ENCODE measurements at regions of chr17 and their contacts with region 1.

Region 1: DNA sequence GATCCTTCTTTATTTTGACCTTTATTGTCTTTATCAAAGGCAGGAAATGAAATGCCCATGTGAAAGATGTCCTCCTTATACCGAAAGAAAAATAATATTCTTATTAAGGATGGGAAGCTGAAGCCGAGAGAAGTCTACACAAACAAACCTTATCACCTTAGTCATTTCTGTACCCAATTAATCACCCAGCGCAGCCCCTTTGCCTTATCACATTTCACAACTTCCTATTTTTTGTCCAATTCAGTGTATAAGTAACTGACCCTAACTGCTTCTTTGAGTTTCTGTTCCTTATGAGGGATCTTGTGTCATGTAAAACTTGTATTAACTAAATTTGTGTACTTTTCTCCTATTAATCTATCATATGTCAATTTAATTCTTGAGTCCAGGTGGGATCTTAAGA is 16.4 kb upstream of the CCL23 start:
- DNase-seq: no peak
- ATAC-seq: peak; percentile 96
- H3K4me3 Mint-ChIP-seq: no peak overlapping the region
- H3K27ac Mint-ChIP-seq: peak overlapping the region; percentile 6
- H3K4me1 Mint-ChIP-seq: peaks cover 23% of the 10 kb centered on the region
- H3K27me3 Mint-ChIP-seq: peaks cover 12% of the 10 kb centered on the region
- CTCF ChIP-seq: no peak

Region 2: DNA sequence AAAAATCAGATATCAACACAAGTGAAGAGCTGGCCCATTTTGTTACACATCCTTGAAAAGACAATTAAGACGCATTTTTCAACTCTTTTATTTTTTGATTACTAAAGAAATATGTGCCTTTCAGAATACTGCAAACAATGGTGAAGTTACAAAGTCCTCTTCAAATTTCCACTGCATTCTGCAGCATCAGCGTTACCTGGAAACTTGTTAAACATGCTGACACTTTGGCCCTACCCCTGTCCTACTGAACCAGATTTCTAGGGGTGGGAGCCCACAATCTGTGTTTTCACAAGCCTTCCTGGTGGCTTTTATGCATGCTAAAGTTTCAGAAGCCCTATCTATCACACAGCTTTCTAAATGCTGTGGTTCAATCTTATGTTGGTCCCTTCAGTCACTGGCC is 43.1 kb before region 1 on chr17:
- CTCF ChIA-PET with region 1: no interaction called
- POLR2A ChIA-PET with region 1: no interaction called
- intact Hi-C with region 1: loop called (anchors 5 kb)
- DNase-seq: no peak
- ATAC-seq: no peak
- H3K4me3 Mint-ChIP-seq: no peak overlapping the region
- H3K27ac Mint-ChIP-seq: no peak overlapping the region
- H3K4me1 Mint-ChIP-seq: peaks cover 19% of the 10 kb centered on the region
- H3K27me3 Mint-ChIP-seq: peaks cover 7% of the 10 kb centered on the region
- CTCF ChIP-seq: no peak

Region 3: DNA sequence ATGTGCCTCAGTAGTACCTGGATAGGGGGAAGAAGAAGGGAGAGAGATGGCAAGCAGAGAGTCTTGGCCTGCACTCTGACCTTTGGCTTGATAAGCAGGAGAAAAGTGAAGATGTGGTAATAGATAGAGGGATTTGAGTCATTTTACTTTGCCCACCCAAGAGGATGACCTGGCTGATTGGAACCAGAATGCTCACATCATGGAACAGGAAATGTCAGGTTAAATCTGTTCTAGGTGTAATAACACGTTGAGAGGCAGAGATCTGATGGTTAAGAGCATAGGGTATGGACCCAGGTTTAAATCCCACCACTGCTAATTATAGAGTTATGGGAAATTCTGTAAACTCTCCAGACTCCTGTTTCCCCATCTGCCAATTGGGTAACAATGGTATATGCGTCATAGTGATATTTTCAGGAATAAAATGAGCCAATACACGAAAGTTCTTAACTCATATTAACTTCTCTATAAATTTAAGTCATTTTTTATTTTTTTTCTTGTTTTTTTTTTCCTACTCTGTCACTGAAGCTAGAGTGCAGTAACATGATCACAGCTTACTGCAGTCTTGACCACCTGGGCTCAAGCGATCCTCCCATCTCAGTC is 21.9 kb after region 1 on chr17:
- CTCF ChIA-PET with region 1: no interaction called
- POLR2A ChIA-PET with region 1: no interaction called
- intact Hi-C with region 1: no loop called
- DNase-seq: no peak
- ATAC-seq: no peak
- H3K4me3 Mint-ChIP-seq: no peak overlapping the region
- H3K27ac Mint-ChIP-seq: no peak overlapping the region
- H3K4me1 Mint-ChIP-seq: peaks cover 3% of the 10 kb centered on the region
- H3K27me3 Mint-ChIP-seq: peaks cover 3% of the 10 kb centered on the region
- CTCF ChIP-seq: no peak

Region 4: GRCh38 chr17:36066365-36066985 is 32.3 kb after region 1 on chr17:
- CTCF ChIA-PET with region 1: no interaction called
- POLR2A ChIA-PET with region 1: no interaction called
- intact Hi-C with region 1: no loop called
- DNase-seq: no peak
- ATAC-seq: no peak
- H3K4me3 Mint-ChIP-seq: no peak overlapping the region
- H3K27ac Mint-ChIP-seq: no peak overlapping the region
- H3K4me1 Mint-ChIP-seq: peaks cover 5% of the 10 kb centered on the region
- H3K27me3 Mint-ChIP-seq: peaks cover 3% of the 10 kb centered on the region
- CTCF ChIP-seq: no peak

Region 5: DNA sequence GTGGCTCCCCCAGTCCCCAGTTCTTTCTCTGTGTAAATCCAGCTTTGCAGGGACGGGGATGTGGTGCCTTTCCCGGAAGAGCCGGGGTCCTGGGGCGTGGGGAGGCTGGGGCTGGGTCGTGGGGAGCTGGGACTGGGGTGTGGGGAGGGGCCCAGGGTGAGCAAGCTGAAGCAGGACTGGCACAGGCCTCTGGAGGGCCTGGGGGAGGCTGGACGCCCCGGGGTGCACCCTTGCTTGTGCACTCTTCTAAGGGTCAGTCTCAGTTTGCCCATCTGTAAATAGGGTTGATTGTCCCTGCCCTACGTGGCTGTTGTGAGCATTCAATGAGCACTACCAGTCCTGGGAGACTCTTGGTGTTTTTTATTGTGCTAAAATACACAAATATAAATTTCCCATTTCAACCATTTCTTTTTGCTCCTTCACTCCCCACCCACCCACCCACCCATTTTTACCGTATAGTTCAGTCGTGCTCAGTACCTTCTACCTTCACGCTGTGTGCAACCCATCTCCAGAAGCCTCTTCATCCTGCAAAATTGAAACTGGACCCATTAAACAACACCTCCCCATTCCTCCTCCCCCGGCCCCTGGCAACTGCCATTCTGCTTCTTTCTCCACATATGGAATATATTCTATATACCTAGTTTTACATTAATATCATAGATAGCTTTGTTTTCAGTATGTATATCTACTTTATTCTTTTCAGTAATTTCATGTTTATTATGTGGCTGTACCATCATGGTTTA is 150.1 kb after region 1 on chr17:
- CTCF ChIA-PET with region 1: no interaction called
- POLR2A ChIA-PET with region 1: interaction called, 13 read pairs
- intact Hi-C with region 1: no loop called
- DNase-seq: no peak
- ATAC-seq: no peak
- H3K4me3 Mint-ChIP-seq: no peak overlapping the region
- H3K27ac Mint-ChIP-seq: no peak overlapping the region
- H3K4me1 Mint-ChIP-seq: peaks cover 8% of the 10 kb centered on the region
- H3K27me3 Mint-ChIP-seq: peaks cover 5% of the 10 kb centered on the region
- CTCF ChIP-seq: no peak

Measured in activated B cell treated with CpG ODN at 0.5 μM for 24 hours (primary cell).